ENCODE measurements at regions of chr1 and their contacts with region 1.

Region 1: DNA sequence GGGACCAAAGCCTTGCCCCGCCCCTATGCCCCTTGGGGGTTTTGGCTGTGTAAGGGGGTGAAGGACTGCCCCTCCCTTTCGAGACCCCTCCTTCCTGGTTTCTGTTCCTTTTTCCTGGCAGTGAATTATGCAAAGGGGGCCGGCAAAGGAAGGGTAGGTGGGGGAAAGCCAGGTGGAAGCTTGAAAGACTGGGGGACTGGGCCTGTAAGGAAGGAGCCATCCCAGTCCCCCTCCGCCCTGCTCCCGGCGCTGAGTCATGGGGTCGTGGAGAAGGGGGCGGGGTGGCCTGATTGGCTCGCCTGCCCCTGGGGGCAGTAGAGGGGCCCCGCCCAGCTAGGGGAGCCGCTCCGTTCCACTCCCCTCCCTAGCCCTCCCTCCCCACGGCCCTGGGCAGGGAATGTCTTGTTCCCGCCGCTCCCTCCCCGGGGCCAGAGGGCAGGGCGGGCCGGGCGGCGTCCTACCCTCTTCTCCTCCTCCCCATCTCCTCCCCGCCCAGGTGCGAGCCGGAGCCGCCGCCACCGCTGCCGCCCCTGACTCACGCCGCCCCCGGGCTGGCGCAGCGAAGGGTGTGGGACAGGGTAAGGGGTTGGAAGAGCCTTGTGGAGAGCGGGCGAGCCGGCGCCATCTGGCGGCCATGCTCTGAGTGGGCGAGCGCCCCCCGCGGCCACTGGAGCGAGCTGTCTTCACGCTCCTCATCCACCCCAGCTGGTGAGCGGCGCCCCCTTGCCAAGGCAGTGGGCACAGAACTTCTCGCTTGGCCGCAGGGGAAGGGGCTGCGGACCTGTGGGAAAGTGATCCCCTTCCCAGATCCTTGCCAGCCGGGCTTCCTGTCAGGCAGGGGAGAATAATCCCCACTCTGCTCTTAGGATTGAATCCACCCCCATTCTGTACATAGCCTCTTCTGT is 14.7 kb downstream of the ZBTB7B start:
- DNase-seq: peak; percentile 89 to 98
- H3K4me3 ChIP-seq: no peak overlapping the region
- CTCF ChIP-seq: peak in 1 of 3 donors; percentile 98
- POLR2A ChIP-seq: no peak

Region 2: DNA sequence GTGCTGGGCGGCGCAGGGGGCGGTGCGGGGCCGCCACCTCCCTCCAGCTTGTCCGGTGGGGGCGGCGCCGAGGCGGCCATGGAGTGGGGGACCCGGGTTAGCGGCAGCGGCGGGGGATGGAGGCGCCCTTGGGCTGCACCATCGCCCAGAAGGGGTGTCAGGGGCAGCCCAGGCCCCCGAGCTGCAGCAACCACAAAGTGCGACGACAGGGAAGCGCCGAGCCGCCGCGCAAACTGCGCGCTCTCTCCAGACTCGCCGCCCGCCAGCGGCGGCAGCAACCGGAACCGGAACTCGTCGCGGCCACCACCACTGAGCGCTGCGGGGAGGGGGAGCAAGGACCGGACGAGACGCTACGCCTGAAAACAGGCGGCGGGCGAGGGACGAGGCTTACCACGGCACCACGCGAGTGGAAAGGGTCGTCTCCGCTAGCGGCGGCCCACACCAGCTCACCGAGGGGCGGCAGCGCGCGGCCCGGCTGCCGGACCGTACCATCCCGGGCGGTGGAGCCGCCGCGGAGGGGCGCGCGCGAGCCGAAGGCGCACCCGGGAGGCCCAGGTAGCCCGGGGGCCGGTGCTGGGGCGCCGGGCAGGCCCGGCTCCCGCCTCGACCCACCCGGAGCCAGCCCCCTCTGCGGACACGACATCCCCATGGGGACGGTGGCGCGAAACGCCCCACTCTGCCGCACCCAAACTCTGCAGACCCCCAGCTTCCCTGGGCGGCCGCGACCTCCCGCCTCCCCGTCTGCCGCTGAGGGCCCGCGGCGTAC is 55.6 kb before region 1 on chr1 and contains the start of gene PYGO2:
- intact Hi-C with region 1: loop called (anchors 10 kb)
- DNase-seq: peak; percentile 59 to 96
- H3K4me3 ChIP-seq: peak within 1 kb of the TSS; percentile 67
- CTCF ChIP-seq: peak in 1 of 3 donors; percentile 39
- POLR2A ChIP-seq: no peak
- total RNA-seq, gene PYGO2: 31.9 to 38.0 (median 36.3) TPM

Measured in lower leg skin (tissue), 4 donors.